Psoas muscle (tissue), 8 donors: ENCODE measurements at regions of chr13 and their contacts with region 1.

Region 1: GRCh38 chr13:26325876-26326275 is 71.9 kb downstream of the CDK8 start:
- DNase-seq: no peak
- ATAC-seq: peak; percentile 74 to 82 (median 79)
- H3K4me3 ChIP-seq: peak overlapping the region; percentile 9
- H3K27ac ChIP-seq: peak overlapping the region; percentile 83
- H3K4me1 ChIP-seq: peaks cover 55% of the 10 kb centered on the region
- H3K27me3 ChIP-seq: no peaks in the 10 kb centered on the region
- CTCF ChIP-seq: no peak

Region 2: DNA sequence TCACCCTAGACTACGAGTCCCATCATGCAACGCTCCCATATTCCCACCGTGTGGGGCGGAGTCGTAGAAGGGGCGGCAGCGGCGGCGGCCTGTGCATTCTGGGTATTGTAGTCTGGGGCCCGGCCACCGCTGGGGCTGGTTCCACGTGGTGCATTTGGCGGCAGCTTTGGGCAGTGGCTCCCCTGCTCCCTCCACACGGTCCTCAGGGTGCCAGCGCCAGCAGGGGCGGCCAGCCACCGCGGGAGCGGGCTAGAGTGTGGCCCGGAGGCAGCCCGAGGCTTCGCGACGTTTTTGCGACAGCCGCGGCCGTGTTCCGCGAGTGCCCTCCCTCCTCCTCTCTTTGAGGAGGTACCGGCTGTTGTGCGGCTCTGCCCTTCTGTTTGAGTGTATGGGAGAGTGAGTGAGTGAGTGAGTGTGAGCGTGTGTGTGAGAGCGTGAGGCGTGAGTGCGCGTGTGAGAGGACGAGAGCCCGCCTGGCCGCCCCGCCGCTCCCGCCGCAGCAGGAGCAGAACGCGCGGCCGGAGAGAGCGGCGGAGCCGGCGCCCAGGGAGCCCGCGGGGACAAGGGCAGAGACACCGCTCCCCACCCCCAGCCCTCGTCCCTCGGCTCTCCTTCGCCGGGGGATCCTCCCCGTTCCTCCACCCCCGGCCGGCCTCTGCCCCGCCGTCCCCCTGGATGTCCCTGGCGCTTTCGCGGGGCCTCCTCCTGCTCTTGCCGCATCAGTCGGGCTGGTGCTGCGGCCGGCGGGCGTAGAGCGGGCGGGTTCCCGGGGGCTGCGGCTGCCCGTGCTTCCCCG is 71.9 kb before region 1 on chr13 and contains the start of gene CDK8:
- intact Hi-C with region 1: loop called in 1 of 2 experiments (anchors 5 kb)
- DNase-seq: peak; percentile 94 to 97
- ATAC-seq: peak; percentile 91 to 94 (median 93)
- H3K4me3 ChIP-seq: peak within 1 kb of the TSS; percentile 96
- H3K27ac ChIP-seq: peak within 1 kb of the TSS; percentile 93
- H3K4me1 ChIP-seq: peaks cover 7% of the 10 kb centered on the region
- H3K27me3 ChIP-seq: no peaks in the 10 kb centered on the region
- CTCF ChIP-seq: no peak
- total RNA-seq, gene CDK8: 6.2 to 9.3 (median 8.6) TPM

Region 3: DNA sequence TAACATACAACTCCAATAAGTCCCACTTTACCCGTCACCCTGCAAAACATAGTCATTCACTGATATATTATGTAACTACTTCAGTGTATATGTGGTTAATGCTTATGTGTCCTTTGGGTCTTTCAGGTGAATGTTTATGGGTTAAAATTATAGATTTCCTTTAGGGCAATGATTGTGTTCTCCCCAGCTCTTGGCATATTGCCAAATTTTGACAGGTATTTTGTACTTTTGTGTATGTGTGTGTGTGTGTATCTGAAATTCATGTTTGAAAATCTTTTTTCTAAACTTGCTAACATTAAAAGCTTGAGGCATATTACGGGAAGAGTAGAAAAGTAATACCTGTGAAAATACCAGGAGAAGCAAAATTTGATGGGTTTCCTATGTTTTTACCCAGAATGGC is 63.7 kb before region 1 on chr13:
- intact Hi-C with region 1: loop called (anchors 5 to 10 kb)
- DNase-seq: no peak
- ATAC-seq: no peak
- H3K4me3 ChIP-seq: no peak overlapping the region
- H3K27ac ChIP-seq: no peak overlapping the region
- H3K4me1 ChIP-seq: peaks cover 27% of the 10 kb centered on the region
- H3K27me3 ChIP-seq: no peaks in the 10 kb centered on the region
- CTCF ChIP-seq: no peak

Region 4: GRCh38 chr13:26280295-26280694 is 45.6 kb before region 1 on chr13:
- intact Hi-C with region 1: loop called in 1 of 2 experiments (anchors 5 kb)
- DNase-seq: no peak
- ATAC-seq: no peak
- H3K4me3 ChIP-seq: no peak overlapping the region
- H3K27ac ChIP-seq: no peak overlapping the region
- H3K4me1 ChIP-seq: peaks cover 30% of the 10 kb centered on the region
- H3K27me3 ChIP-seq: no peaks in the 10 kb centered on the region
- CTCF ChIP-seq: no peak

Region 5: GRCh38 chr13:26442541-26442940 is 116.7 kb after region 1 on chr13:
- intact Hi-C with region 1: no loop called
- DNase-seq: no peak
- ATAC-seq: peak; percentile 38 to 53 (median 47)
- H3K4me3 ChIP-seq: no peak overlapping the region
- H3K27ac ChIP-seq: no peak overlapping the region
- H3K4me1 ChIP-seq: no peaks in the 10 kb centered on the region
- H3K27me3 ChIP-seq: peaks cover 0 to 3% (median 0%) of the 10 kb centered on the region in 3 donors
- CTCF ChIP-seq: no peak

Region 6: GRCh38 chr13:26476111-26476781 is 150.4 kb after region 1 on chr13:
- intact Hi-C with region 1: no loop called
- DNase-seq: peak; percentile 52 to 82
- ATAC-seq: peak; percentile 40 to 74 (median 50)
- H3K4me3 ChIP-seq: peak overlapping the region; percentile 11
- H3K27ac ChIP-seq: peak overlapping the region; percentile 25
- H3K4me1 ChIP-seq: no peaks in the 10 kb centered on the region
- H3K27me3 ChIP-seq: peaks cover 0 to 2% (median 0%) of the 10 kb centered on the region in 3 donors
- CTCF ChIP-seq: no peak